ENCODE measurements at regions of chr4 and their contacts with region 1.

Region 1: GRCh38 chr4:38470735-38471262 is 193.2 kb upstream of the KLF3 start:
- DNase-seq: no peak
- ATAC-seq: no peak
- H3K4me3 ChIP-seq: no peak overlapping the region
- H3K4me3 Mint-ChIP-seq: no peak overlapping the region
- H3K27ac ChIP-seq: no peak overlapping the region
- H3K27ac Mint-ChIP-seq: no peak overlapping the region
- H3K4me1 ChIP-seq: no peaks in the 10 kb centered on the region
- H3K4me1 Mint-ChIP-seq: peaks cover under 1% of the 10 kb centered on the region
- H3K27me3 ChIP-seq: no peaks in the 10 kb centered on the region
- H3K27me3 Mint-ChIP-seq: no peaks in the 10 kb centered on the region
- CTCF ChIP-seq: no peak

Region 2: GRCh38 chr4:37885496-37885895 is 585.3 kb before region 1 on chr4:
- CTCF ChIA-PET with region 1: no interaction called
- POLR2A ChIA-PET with region 1: no interaction called
- intact Hi-C with region 1: no loop called
- DNase-seq: no peak
- ATAC-seq: no peak
- H3K4me3 ChIP-seq: no peak overlapping the region
- H3K4me3 Mint-ChIP-seq: no peak overlapping the region
- H3K27ac ChIP-seq: no peak overlapping the region
- H3K27ac Mint-ChIP-seq: no peak overlapping the region
- H3K4me1 ChIP-seq: peaks cover 4% of the 10 kb centered on the region
- H3K4me1 Mint-ChIP-seq: peaks cover 4% of the 10 kb centered on the region
- H3K27me3 ChIP-seq: no peaks in the 10 kb centered on the region
- H3K27me3 Mint-ChIP-seq: no peaks in the 10 kb centered on the region
- CTCF ChIP-seq: no peak

Region 3: DNA sequence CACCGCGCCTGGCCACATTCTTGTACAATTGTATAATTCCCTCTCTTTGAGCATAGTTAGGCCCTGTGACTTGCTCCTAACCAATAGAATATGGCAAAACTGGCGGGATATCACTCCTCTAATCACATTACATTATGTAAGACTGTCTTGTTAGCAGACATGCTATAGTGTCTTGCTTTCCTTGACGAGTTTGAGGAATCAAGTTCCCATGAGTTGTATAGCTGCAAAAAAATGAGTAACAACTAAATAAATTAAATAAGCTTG is 96.1 kb before region 1 on chr4:
- CTCF ChIA-PET with region 1: no interaction called
- POLR2A ChIA-PET with region 1: no interaction called
- intact Hi-C with region 1: loop called in 1 of 2 experiments (anchors 5 kb)
- DNase-seq: no peak
- ATAC-seq: no peak
- H3K4me3 ChIP-seq: no peak overlapping the region
- H3K4me3 Mint-ChIP-seq: no peak overlapping the region
- H3K27ac ChIP-seq: no peak overlapping the region
- H3K27ac Mint-ChIP-seq: no peak overlapping the region
- H3K4me1 ChIP-seq: no peaks in the 10 kb centered on the region
- H3K4me1 Mint-ChIP-seq: peaks cover 10% of the 10 kb centered on the region
- H3K27me3 ChIP-seq: no peaks in the 10 kb centered on the region
- H3K27me3 Mint-ChIP-seq: no peaks in the 10 kb centered on the region
- CTCF ChIP-seq: no peak

Region 4: DNA sequence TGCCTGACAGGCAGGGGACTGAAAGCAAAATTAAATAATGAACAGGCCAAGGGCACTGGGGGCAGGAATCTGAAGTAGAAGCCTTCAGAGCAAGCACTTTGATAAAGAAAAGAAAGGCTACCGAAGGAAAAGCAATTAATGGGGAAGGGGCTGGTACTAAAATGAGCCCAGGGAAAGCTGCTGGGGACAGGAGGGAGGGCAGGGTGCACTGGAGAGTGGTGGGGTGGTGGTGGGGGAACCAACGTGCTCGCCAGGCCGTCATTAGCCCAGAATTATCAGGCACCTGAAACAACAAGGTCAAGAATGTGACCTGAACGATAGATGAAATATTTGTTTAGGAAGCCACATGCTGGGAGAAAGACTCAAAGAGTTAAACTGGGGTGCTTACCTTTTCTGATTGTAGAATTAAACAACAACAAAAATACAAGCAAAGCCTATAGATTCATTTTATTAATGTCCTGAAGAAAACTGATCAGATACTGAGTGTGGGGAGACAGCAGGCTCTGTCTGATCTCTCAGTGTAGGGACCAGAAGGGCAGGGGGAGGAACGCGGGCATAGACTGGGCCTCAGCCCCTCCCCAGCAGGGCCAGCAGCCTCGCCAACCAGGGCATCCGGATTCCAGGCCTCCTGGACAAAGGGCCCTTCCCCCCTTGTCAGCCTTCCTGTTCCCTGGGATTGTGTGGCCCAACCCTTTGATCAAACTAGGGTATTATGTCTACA is 46.5 kb before region 1 on chr4:
- CTCF ChIA-PET with region 1: no interaction called
- POLR2A ChIA-PET with region 1: no interaction called
- intact Hi-C with region 1: loop called in 1 of 2 experiments (anchors 5 kb)
- DNase-seq: no peak
- ATAC-seq: no peak
- H3K4me3 ChIP-seq: no peak overlapping the region
- H3K4me3 Mint-ChIP-seq: no peak overlapping the region
- H3K27ac ChIP-seq: no peak overlapping the region
- H3K27ac Mint-ChIP-seq: no peak overlapping the region
- H3K4me1 ChIP-seq: peaks cover 8% of the 10 kb centered on the region
- H3K4me1 Mint-ChIP-seq: peaks cover 12% of the 10 kb centered on the region
- H3K27me3 ChIP-seq: no peaks in the 10 kb centered on the region
- H3K27me3 Mint-ChIP-seq: no peaks in the 10 kb centered on the region
- CTCF ChIP-seq: no peak

Region 5: GRCh38 chr4:39658756-39659155 is 1188.0 kb after region 1 on chr4:
- CTCF ChIA-PET with region 1: no interaction called
- POLR2A ChIA-PET with region 1: no interaction called
- intact Hi-C with region 1: no loop called
- DNase-seq: no peak
- ATAC-seq: no peak
- H3K4me3 ChIP-seq: no peak overlapping the region
- H3K4me3 Mint-ChIP-seq: no peak overlapping the region
- H3K27ac ChIP-seq: no peak overlapping the region
- H3K27ac Mint-ChIP-seq: no peak overlapping the region
- H3K4me1 ChIP-seq: no peaks in the 10 kb centered on the region
- H3K4me1 Mint-ChIP-seq: no peaks in the 10 kb centered on the region
- H3K27me3 ChIP-seq: no peaks in the 10 kb centered on the region
- H3K27me3 Mint-ChIP-seq: no peaks in the 10 kb centered on the region
- CTCF ChIP-seq: no peak